Activated T-helper 1 cell treated with anti-CD3 and anti-CD28 coated beads, Interleukin-12 subunit alpha, Interleukin-12 subunit beta, Interleukin-2, Interleukin-4 antibody, amounts not matched to agents 30 ng/mL and 10 ng/mL and 1 ng/mL, durations not matched to agents 14 hours and 24 hours and 36 hours (primary cell): ENCODE measurements at regions of chrX and their contacts with region 1.

Region 1: GRCh38 chrX:72540318-72540717 is 32.3 kb downstream of the HDAC8 start:
- DNase-seq: no peak
- H3K4me3 Mint-ChIP-seq: no peak overlapping the region
- H3K27ac Mint-ChIP-seq: no peak overlapping the region
- H3K4me1 Mint-ChIP-seq: no peaks in the 10 kb centered on the region
- H3K27me3 Mint-ChIP-seq: no peaks in the 10 kb centered on the region

Region 2: DNA sequence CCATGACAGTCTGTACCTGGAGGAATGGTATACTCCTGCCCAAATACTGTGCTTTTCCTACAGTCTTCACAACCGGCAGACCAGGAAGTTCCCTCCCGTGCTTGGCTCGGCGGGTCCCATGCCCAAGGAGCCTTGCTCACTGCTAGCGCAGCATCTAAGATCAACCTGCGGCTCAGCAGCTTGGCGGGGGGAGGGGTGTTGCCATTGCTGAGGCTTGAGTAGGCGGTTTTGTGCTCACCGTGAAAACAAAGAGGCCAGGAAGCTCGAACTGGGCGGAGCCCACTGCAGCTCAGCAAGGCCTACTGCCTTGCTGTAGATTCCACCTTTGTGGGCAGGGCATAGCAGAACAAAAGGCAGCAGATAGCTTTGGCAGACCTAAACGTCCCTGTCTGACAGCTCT is 1784.5 kb before region 1 on chrX:
- intact Hi-C with region 1: no loop called
- DNase-seq: peak; percentile 50
- H3K4me3 Mint-ChIP-seq: no peak overlapping the region
- H3K27ac Mint-ChIP-seq: peak overlapping the region; percentile 8
- H3K4me1 Mint-ChIP-seq: peaks cover 27% of the 10 kb centered on the region
- H3K27me3 Mint-ChIP-seq: no peaks in the 10 kb centered on the region

Region 3: DNA sequence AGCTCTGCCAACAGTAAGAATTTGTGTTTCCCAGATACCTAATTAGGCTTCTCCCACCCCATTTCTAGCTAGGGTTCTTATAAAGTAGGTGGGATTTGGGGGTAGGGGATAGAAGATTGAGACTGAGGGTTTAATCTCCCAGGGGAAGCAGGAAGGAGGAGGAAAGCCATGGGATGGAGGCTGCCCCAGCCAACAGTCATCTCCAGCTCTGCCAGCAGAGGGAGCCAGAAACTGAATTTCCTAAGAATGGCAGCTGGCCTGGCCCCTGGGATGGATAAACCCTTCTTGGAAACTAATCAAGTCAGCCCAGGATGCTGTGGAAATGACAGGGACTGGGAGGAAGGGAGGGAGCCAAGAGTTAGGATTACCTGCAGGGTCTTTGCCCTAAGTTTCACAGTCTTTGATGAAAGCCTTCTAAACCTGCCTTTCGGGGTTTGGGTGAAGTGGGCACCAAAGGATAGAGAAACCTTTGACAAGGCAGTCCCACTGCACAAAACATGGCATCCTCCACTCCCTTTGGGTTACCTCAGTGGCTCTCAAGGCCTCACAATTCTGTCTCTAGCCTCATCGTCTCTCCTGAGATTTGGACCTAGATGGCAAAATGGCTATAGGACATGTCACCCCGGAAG is 294.7 kb before region 1 on chrX:
- intact Hi-C with region 1: loop called (anchors 2 kb)
- DNase-seq: peak; percentile 8
- H3K4me3 Mint-ChIP-seq: no peak overlapping the region
- H3K27ac Mint-ChIP-seq: no peak overlapping the region
- H3K4me1 Mint-ChIP-seq: peaks cover 5% of the 10 kb centered on the region
- H3K27me3 Mint-ChIP-seq: no peaks in the 10 kb centered on the region

Region 4: GRCh38 chrX:72297953-72298730 is 242.2 kb before region 1 on chrX:
- intact Hi-C with region 1: loop called (anchors 2 kb)
- DNase-seq: no peak
- H3K4me3 Mint-ChIP-seq: no peak overlapping the region
- H3K27ac Mint-ChIP-seq: no peak overlapping the region
- H3K4me1 Mint-ChIP-seq: no peaks in the 10 kb centered on the region
- H3K27me3 Mint-ChIP-seq: peaks cover 33% of the 10 kb centered on the region